Spleen (tissue), 13 donors: ENCODE measurements at regions of chr6 and their contacts with region 1.

Region 1: DNA sequence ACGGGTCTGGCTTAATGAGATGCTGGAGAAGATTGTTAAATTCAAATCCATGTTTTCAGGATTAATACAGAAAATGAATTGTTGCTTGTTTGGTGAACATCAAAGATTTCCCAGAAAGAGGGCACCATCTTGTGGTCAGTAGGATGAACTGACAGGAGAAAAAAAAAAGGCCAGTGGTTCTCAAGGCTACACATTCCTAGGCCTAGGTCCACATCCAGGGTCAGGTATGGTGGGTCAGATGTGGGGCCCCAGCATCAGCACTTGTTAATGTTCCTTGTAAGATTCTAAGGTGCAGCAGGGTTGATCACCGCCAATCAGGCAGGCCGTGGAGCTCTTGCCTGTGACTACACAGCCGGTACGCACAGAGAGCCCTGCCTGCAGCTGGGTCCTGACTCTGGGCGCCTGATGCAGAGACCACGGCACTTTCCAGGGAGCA is 34.0 kb upstream of the FOXO3 start:
- DNase-seq: no peak
- H3K4me3 ChIP-seq: no peak overlapping the region
- H3K27ac ChIP-seq: no peak overlapping the region
- H3K4me1 ChIP-seq: no peaks in the 10 kb centered on the region
- H3K27me3 ChIP-seq: no peaks in the 10 kb centered on the region
- CTCF ChIP-seq: peak; percentile 58 to 85 (median 72)
- POLR2A ChIP-seq: no peak

Region 2: GRCh38 chr6:107977283-107977682 is 549.5 kb before region 1 on chr6:
- intact Hi-C with region 1: loop called (anchors 5 kb)
- DNase-seq: no peak
- H3K4me3 ChIP-seq: no peak overlapping the region
- H3K27ac ChIP-seq: no peak overlapping the region
- H3K4me1 ChIP-seq: no peaks in the 10 kb centered on the region
- H3K27me3 ChIP-seq: no peaks in the 10 kb centered on the region
- CTCF ChIP-seq: peak in 2 of 11 experiments; percentile 20 to 28
- POLR2A ChIP-seq: no peak

Region 3: DNA sequence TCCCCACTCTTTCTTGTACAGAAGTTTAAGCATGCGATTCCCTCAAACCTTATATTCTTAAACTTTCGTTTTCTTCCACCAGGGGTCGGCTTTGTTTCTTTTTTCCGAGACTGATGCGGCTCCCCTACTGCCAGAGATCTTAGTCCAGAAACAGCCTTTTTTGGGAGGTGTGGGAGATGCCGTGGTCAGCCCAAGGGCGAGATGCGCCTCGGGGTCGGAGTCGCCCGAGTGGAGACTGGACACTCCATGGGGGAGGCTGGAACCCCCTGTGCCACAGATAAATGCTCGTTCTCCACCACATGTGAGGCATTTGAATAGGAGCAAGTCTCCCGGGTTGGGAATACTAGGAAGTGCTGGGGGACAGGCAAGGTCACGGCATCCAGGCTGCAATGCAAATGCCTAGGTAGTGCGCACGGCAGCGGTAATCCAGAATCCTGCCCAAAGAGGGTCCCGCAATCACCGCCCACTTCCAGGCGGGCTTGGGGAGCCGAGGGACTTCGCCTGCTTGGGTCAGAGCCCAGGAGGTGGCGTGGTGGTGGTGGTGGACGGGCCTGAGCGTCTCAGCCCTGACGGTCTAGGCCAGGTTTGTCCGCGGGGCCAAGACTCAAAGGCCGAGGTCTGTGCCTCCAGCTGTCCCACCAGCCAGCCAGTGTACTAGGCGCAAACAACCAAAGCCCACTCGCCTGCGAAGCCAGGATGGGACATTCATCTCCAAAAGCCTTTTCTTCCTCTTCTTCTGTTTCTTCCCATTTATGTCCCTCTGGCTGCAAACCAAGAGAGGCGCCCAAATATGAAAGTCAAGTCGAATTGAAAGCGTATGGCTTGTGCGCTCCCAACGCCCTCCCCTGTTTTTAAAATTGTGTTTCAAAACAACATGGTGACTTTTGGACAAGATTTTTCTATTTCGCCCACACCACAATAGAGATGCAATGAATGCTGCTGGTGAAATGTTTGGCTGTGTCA is 412.9 kb before region 1 on chr6:
- intact Hi-C with region 1: loop called (anchors 5 kb)
- DNase-seq: no peak
- H3K4me3 ChIP-seq: peak overlapping the region in 5 of 8 donors; percentile 7 to 69 (median 11)
- H3K27ac ChIP-seq: no peak overlapping the region
- H3K4me1 ChIP-seq: peaks cover 23 to 57% (median 50%) of the 10 kb centered on the region in 6 donors
- H3K27me3 ChIP-seq: peaks cover 5 to 95% (median 46%) of the 10 kb centered on the region in 7 donors
- CTCF ChIP-seq: peak; percentile 27 to 64 (median 48)
- POLR2A ChIP-seq: no peak